T-cell (primary cell): ENCODE measurements at regions of chr20 and their contacts with region 1.

Region 1: DNA sequence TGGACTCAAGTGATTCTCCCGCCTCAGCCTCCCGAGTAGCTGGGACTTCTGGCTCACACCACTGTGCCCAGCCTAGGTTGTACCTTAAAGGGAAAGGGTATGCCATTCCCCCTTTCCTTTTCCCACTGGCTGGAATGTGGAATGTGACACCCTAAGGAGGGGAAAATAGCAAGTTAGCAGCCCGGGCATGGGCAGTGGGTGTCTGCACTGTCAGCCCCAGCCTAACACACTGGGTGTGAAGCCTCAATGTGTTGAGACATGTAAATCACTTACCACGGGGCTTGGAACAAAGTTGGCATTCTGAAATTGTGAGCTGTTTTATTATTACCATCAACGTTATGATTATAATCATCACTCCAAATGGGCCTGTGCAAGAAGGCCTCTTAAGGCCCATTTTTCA is 80.8 kb upstream of the PTPN1 start:
- DNase-seq: no peak
- ATAC-seq: no peak
- H3K4me3 ChIP-seq: no peak overlapping the region
- H3K4me3 Mint-ChIP-seq: no peak overlapping the region
- H3K27ac ChIP-seq: no peak overlapping the region
- H3K27ac Mint-ChIP-seq: no peak overlapping the region
- H3K4me1 ChIP-seq: no peaks in the 10 kb centered on the region
- H3K4me1 Mint-ChIP-seq: no peaks in the 10 kb centered on the region
- H3K27me3 ChIP-seq: peaks cover 0 to 16% of the 10 kb centered on the region in 2 experiments
- H3K27me3 Mint-ChIP-seq: peaks cover 5 to 8% of the 10 kb centered on the region in 2 donors

Region 2: DNA sequence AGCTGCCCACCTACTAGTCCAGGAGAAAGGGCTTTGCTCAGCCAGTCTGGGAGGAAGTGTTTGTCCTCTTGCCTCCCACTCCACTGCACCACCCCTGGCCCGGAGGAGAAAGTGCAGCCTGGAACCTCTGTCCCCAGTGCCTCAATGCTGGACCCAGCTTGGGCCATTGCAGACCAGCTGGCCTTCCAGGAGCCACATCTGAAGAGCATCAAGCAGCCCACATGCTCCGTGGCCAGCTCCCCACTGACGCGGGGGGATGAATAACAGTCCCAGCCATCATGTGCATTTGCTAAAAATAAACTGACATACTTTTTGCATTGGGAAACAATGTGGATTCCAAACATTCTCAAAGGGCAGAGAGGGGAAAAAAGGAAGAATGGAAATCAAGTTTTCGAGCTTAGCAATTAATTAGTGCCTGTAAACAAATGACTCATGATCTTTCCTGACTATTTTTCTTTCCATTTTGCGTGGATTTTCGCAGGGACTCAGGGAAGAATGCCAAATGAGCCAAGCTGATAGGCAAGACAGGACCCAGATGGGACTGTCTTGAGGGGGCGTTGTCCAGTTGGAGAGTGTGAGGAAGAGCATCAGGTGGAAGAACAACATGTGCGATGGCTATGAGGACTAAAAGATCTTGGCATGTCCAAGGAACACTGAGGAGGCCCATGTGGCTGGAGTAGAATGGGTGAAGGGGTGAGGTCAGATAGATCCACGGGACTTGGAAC is 204.7 kb before region 1 on chr20:
- CTCF ChIA-PET with region 1: interaction called in 1 of 2 experiments, 12 read pairs
- POLR2A ChIA-PET with region 1: no interaction called
- DNase-seq: no peak
- ATAC-seq: no peak
- H3K4me3 ChIP-seq: no peak overlapping the region
- H3K4me3 Mint-ChIP-seq: no peak overlapping the region
- H3K27ac ChIP-seq: no peak overlapping the region
- H3K27ac Mint-ChIP-seq: no peak overlapping the region
- H3K4me1 ChIP-seq: no peaks in the 10 kb centered on the region
- H3K4me1 Mint-ChIP-seq: no peaks in the 10 kb centered on the region
- H3K27me3 ChIP-seq: no peaks in the 10 kb centered on the region
- H3K27me3 Mint-ChIP-seq: no peaks in the 10 kb centered on the region